ENCODE measurements at regions of chr1 and their contacts with region 1.

Region 1: GRCh38 chr1:243255791-243256512 is at the start of gene SDCCAG8:
- DNase-seq: peak; percentile 98
- ATAC-seq: peak; percentile 77
- H3K4me3 ChIP-seq: peak within 1 kb of the TSS; percentile 75 to 100 (median 94)
- H3K4me3 Mint-ChIP-seq: peak within 1 kb of the TSS; percentile 97
- H3K27ac ChIP-seq: peak within 1 kb of the TSS; percentile 97 to 99
- H3K27ac Mint-ChIP-seq: peak within 1 kb of the TSS; percentile 99
- H3K4me1 ChIP-seq: peaks cover 19 to 29% of the 10 kb centered on the region in 2 donors
- H3K4me1 Mint-ChIP-seq: peaks cover 45% of the 10 kb centered on the region
- H3K27me3 ChIP-seq: no peaks in the 10 kb centered on the region
- H3K27me3 Mint-ChIP-seq: no peaks in the 10 kb centered on the region
- CTCF ChIP-seq: no peak
- total RNA-seq, gene SDCCAG8: 60.7 and 64.8 TPM in 2 replicates

Region 2: GRCh38 chr1:241640029-241640818 is 1615.7 kb before region 1 on chr1 and contains the starts of genes CHML and OPN3:
- CTCF ChIA-PET with region 1: no interaction called
- POLR2A ChIA-PET with region 1: no interaction called
- intact Hi-C with region 1: loop called (anchors 1 kb)
- DNase-seq: peak; percentile 93
- ATAC-seq: peak; percentile 94
- H3K4me3 ChIP-seq: peak within 1 kb of the TSS; percentile 78 to 97 (median 94)
- H3K4me3 Mint-ChIP-seq: peak within 1 kb of the TSS; percentile 84
- H3K27ac ChIP-seq: peak within 1 kb of the TSS; percentile 71 to 81
- H3K27ac Mint-ChIP-seq: peak within 1 kb of the TSS; percentile 93
- H3K4me1 ChIP-seq: peaks cover 37 to 43% of the 10 kb centered on the region in 2 donors
- H3K4me1 Mint-ChIP-seq: peaks cover 51% of the 10 kb centered on the region
- H3K27me3 ChIP-seq: no peaks in the 10 kb centered on the region
- H3K27me3 Mint-ChIP-seq: no peaks in the 10 kb centered on the region
- CTCF ChIP-seq: no peak
- total RNA-seq, gene CHML: 31.5 and 34.0 TPM in 2 replicates
- total RNA-seq, gene OPN3: 29.2 and 29.6 TPM in 2 replicates

Region 3: DNA sequence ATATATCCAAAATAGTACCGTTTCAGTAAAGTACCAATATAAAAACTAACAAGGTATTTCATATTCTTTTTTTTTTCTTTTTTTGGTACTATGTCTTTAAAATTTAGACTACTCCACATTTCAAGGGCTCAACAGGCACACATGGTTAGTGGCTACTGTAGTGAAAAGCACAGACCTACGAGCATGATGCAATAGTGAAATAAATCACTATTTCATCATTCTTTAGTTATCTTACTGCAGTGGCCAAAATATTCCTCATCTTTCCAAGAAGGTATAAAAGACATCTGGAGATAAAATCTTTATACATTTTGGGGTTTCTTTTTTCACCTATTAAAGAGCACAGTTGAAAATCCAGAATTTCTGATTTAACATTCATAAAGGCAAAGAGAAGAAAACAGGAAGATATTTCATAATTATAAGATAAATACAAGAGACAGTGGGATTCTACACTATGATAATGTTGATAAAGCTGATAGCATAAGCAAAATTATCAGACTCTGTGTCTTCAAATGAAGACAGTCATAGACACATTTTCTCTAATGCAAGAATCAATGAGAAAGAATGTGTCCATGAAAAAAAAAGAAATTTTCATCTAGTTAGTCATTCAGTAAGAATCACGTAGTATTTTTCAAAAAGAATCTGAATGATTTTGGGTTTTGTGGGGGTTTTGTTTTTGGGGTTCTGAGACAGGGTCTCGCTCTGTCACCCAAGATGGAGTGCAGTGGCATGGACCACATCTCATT is 42.7 kb before region 1 on chr1:
- CTCF ChIA-PET with region 1: no interaction called
- POLR2A ChIA-PET with region 1: no interaction called
- intact Hi-C with region 1: no loop called
- DNase-seq: no peak
- ATAC-seq: no peak
- H3K4me3 ChIP-seq: no peak overlapping the region
- H3K4me3 Mint-ChIP-seq: no peak overlapping the region
- H3K27ac ChIP-seq: no peak overlapping the region
- H3K27ac Mint-ChIP-seq: no peak overlapping the region
- H3K4me1 ChIP-seq: no peaks in the 10 kb centered on the region
- H3K4me1 Mint-ChIP-seq: peaks cover 7% of the 10 kb centered on the region
- H3K27me3 ChIP-seq: no peaks in the 10 kb centered on the region
- H3K27me3 Mint-ChIP-seq: no peaks in the 10 kb centered on the region
- CTCF ChIP-seq: no peak

Region 4: GRCh38 chr1:243267914-243268653 is 12.1 kb after region 1 on chr1:
- CTCF ChIA-PET with region 1: interaction called, 4 read pairs
- POLR2A ChIA-PET with region 1: interaction called, 4 read pairs
- intact Hi-C with region 1: loop called (anchors 1 kb)
- DNase-seq: peak; percentile 40
- ATAC-seq: peak; percentile 52
- H3K4me3 ChIP-seq: peak overlapping the region in 1 of 5 experiments; percentile 35
- H3K4me3 Mint-ChIP-seq: peak overlapping the region; percentile 75
- H3K27ac ChIP-seq: peak overlapping the region in 1 of 2 donors; percentile 61
- H3K27ac Mint-ChIP-seq: peak overlapping the region; percentile 62
- H3K4me1 ChIP-seq: peaks cover 31 to 34% of the 10 kb centered on the region in 2 donors
- H3K4me1 Mint-ChIP-seq: peaks cover 44% of the 10 kb centered on the region
- H3K27me3 ChIP-seq: no peaks in the 10 kb centered on the region
- H3K27me3 Mint-ChIP-seq: no peaks in the 10 kb centered on the region
- CTCF ChIP-seq: no peak

Region 5: DNA sequence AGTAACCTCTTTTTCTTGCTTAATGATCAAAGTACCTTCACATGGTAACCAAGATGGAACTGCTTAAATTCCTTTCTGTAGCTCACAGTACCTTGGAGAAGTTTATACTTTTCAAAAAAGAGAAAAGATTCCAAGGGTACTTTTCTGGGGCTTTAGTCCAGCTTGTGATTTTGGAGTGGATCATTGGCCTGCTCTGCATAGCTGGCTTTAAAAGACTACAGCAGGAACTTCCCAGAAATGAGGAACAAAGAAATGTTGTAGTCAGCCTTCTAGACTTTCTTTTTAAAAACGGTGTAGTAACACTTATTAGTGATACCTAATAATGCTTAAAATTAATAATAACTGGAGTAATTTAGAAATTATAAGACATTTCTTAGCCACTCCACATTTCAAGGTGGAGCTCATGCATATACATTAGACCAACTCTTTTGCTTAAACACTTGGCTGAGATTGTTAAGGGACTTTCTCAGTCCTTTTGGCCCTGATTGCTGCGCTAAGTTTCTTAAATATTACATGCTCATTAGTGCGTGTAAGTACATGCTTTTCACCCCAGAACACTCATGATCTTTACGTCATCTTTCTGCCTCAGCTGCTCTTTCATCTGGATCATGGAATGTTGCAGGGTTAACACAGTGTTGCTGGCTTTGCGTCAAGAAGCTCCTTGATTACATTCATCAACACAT is 57.1 kb after region 1 on chr1:
- CTCF ChIA-PET with region 1: interaction called, 9 read pairs
- POLR2A ChIA-PET with region 1: interaction called, 7 read pairs
- intact Hi-C with region 1: loop called (anchors 2 kb)
- DNase-seq: peak; percentile 71
- ATAC-seq: peak; percentile 71
- H3K4me3 ChIP-seq: no peak overlapping the region
- H3K4me3 Mint-ChIP-seq: peak overlapping the region; percentile 70
- H3K27ac ChIP-seq: peak overlapping the region; percentile 50 to 77
- H3K27ac Mint-ChIP-seq: peak overlapping the region; percentile 86
- H3K4me1 ChIP-seq: peaks cover 18 to 20% of the 10 kb centered on the region in 2 donors
- H3K4me1 Mint-ChIP-seq: peaks cover 25% of the 10 kb centered on the region
- H3K27me3 ChIP-seq: no peaks in the 10 kb centered on the region
- H3K27me3 Mint-ChIP-seq: no peaks in the 10 kb centered on the region
- CTCF ChIP-seq: no peak

Region 6: GRCh38 chr1:243549108-243549507 is 293.2 kb after region 1 on chr1:
- CTCF ChIA-PET with region 1: no interaction called
- POLR2A ChIA-PET with region 1: no interaction called
- intact Hi-C with region 1: no loop called
- DNase-seq: no peak
- ATAC-seq: no peak
- H3K4me3 ChIP-seq: no peak overlapping the region
- H3K4me3 Mint-ChIP-seq: no peak overlapping the region
- H3K27ac ChIP-seq: no peak overlapping the region
- H3K27ac Mint-ChIP-seq: no peak overlapping the region
- H3K4me1 ChIP-seq: no peaks in the 10 kb centered on the region
- H3K4me1 Mint-ChIP-seq: no peaks in the 10 kb centered on the region
- H3K27me3 ChIP-seq: no peaks in the 10 kb centered on the region
- H3K27me3 Mint-ChIP-seq: no peaks in the 10 kb centered on the region
- CTCF ChIP-seq: no peak

Region 7: DNA sequence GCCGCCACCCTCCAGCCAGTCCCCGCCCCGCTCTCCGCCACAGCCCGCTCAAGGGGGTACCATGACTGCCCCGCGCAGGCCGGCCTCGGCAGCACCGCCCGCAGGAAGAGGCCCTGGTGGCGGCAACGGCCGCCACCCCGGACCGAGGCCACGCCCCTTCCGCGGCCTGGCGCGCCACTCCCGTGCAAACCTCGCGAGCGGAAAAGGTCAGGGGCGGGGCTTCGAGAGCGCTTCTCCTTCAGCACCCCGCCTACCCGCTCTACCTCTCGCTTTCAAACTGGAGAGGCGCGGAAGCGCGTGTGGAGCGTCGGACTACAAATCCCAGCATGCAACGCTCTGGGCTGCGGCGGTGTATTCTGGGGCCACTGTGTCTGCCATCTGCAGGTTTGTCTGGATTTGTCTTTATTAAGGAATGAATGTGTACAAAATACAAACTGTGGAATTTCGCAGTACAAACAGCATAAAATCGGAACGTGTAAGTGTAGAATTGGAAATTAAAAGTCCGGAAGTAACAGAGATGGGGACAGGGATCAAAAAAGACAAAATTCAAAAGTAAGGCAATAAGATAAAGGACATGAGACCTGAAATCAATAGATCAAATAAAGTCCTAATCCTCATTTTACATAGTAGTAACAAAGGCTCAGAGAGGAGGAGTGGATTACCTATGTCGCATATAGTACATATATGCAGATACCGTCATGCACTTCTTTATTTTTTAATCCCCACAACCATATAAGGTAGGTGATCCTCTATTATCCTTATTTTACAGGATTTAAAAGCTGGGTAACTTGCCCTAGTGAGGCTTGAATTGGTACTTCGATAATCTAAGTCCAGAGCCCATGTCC is 1196.2 kb after region 1 on chr1:
- CTCF ChIA-PET with region 1: no interaction called
- POLR2A ChIA-PET with region 1: no interaction called
- intact Hi-C with region 1: loop called (anchors 1 kb)
- DNase-seq: peak; percentile 100
- ATAC-seq: peak; percentile 92
- H3K4me3 ChIP-seq: peak overlapping the region in 4 of 5 experiments; percentile 88 to 98 (median 93)
- H3K4me3 Mint-ChIP-seq: peak overlapping the region; percentile 95
- H3K27ac ChIP-seq: peak overlapping the region; percentile 92 to 94
- H3K27ac Mint-ChIP-seq: peak overlapping the region; percentile 94
- H3K4me1 ChIP-seq: peaks cover 17 to 18% of the 10 kb centered on the region in 2 donors
- H3K4me1 Mint-ChIP-seq: peaks cover 35% of the 10 kb centered on the region
- H3K27me3 ChIP-seq: no peaks in the 10 kb centered on the region
- H3K27me3 Mint-ChIP-seq: no peaks in the 10 kb centered on the region
- CTCF ChIP-seq: peak; percentile 47

Measured in B cell (primary cell).